Endothelial cell of umbilical vein (primary cell): ENCODE measurements at regions of chr10 and their contacts with region 1.

Region 1: DNA sequence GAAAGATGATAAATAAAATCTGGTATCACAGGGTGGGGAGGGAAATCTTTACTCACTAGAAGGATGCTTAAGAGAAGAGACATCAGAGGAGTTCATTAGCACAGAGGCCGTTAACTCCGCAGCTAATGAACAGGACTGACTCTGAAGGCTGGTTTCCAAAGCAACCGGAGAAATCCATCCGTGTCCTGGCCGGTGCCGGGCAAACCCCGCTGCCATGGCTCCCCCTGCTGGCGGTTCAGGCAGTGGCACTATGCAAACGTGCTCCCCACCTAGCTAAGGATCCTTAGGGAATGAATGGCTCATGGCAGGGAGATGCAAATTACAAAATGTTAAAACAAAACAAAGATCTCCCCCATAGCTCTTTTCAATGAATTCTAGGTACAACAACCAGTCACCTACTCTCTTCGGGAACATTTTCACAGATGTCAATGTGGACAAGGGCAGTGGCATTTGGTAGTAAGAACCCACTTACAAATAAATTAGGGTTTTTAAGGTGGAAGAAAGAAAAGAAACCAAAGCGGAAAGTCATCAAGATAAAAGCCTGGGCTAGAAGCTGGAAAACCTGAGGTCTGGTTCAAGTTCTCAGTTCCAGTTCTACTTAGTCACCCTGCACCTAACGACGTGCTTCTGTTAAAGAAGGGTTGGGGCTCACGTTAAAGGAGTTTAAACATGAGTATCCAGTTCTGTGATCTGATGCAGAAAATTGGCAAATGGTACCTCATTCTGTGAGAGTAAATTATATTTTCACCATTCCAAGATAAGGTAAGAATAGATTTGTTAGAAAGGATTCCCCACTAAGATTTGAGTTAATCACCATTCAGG is 138.2 kb downstream of the SVIL start:
- DNase-seq: peak; percentile 72
- H3K4me3 ChIP-seq: no peak overlapping the region
- H3K27ac ChIP-seq: no peak overlapping the region
- H3K4me1 ChIP-seq: no peaks in the 10 kb centered on the region
- H3K27me3 ChIP-seq: no peaks in the 10 kb centered on the region
- CTCF ChIP-seq: peak; percentile 97 to 98
- POLR2A ChIP-seq: no peak

Region 2: GRCh38 chr10:29377333-29377961 is 119.1 kb before region 1 on chr10:
- CTCF ChIA-PET with region 1: interaction called, 4 read pairs
- POLR2A ChIA-PET with region 1: no interaction called
- dilution Hi-C with region 1: no loop called
- intact Hi-C with region 1: loop called (anchors 2 kb)
- DNase-seq: peak; percentile 30
- H3K4me3 ChIP-seq: no peak overlapping the region
- H3K27ac ChIP-seq: no peak overlapping the region
- H3K4me1 ChIP-seq: no peaks in the 10 kb centered on the region
- H3K27me3 ChIP-seq: peaks cover 2 to 3% of the 10 kb centered on the region in 2 experiments
- CTCF ChIP-seq: peak; percentile 37 to 64
- POLR2A ChIP-seq: no peak

Region 3: GRCh38 chr10:29482591-29483431 is 13.7 kb before region 1 on chr10:
- CTCF ChIA-PET with region 1: interaction called, 13 read pairs
- POLR2A ChIA-PET with region 1: no interaction called
- dilution Hi-C with region 1: no loop called
- intact Hi-C with region 1: no loop called
- DNase-seq: no peak
- H3K4me3 ChIP-seq: no peak overlapping the region
- H3K27ac ChIP-seq: peak overlapping the region; percentile 48
- H3K4me1 ChIP-seq: peaks cover 8% of the 10 kb centered on the region
- H3K27me3 ChIP-seq: no peaks in the 10 kb centered on the region
- CTCF ChIP-seq: peak in 1 of 2 donors; percentile 4
- POLR2A ChIP-seq: no peak